Kidney (tissue), 22 donors: ENCODE measurements at regions of chr19 and their contacts with region 1.

Region 1: GRCh38 chr19:17993076-17993813 is 14.7 kb upstream of the ARRDC2 start:
- DNase-seq: no peak
- H3K4me3 ChIP-seq: no peak overlapping the region
- H3K27ac ChIP-seq: no peak overlapping the region
- H3K4me1 ChIP-seq: no peaks in the 10 kb centered on the region
- H3K27me3 ChIP-seq: no peaks in the 10 kb centered on the region
- CTCF ChIP-seq: no peak

Region 2: DNA sequence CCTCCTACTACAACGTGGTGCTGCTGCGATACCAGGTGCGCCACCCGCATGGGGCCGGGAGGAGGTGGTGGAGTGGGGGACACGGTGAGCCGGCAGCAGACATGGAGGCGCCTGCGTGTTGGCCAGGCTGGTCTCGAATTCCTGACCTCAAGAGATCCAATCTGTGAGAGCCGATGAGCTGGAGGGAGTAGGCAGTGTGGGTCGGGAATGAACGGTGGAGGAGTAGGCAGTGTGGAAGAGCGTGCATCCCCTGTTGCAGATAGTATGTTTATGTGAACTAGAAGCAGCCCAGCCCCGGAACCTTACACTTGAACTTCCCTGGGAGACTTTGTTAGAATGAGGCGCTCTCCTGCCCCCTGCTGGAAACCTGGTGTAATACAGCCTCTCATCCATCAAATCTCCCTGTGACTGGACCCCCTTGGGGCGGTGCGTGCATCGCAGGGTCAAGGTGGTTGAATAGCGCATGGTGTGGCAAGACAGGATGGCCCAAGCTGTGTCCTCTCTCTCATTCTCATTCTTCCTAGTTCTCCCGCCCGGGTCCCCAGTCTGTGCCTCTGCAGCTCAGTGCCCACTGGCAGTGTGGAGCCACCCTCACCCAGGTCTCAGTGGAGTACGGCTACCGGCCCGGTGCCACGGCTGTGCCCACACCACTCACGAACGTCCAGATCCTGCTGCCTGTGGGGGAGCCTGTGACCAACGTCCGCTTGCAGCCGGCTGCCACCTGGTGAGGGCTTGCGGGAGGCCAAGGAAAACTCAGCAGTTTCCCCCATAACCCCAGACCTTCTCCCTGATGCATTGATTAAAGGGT is 208.8 kb before region 1 on chr19:
- intact Hi-C with region 1: no loop called
- DNase-seq: peak; percentile 78 to 91 (median 86)
- H3K4me3 ChIP-seq: peak overlapping the region in 2 of 3 donors; percentile 3 to 4
- H3K27ac ChIP-seq: no peak overlapping the region
- H3K4me1 ChIP-seq: no peaks in the 10 kb centered on the region
- H3K27me3 ChIP-seq: no peaks in the 10 kb centered on the region
- CTCF ChIP-seq: peak; percentile 62

Region 3: DNA sequence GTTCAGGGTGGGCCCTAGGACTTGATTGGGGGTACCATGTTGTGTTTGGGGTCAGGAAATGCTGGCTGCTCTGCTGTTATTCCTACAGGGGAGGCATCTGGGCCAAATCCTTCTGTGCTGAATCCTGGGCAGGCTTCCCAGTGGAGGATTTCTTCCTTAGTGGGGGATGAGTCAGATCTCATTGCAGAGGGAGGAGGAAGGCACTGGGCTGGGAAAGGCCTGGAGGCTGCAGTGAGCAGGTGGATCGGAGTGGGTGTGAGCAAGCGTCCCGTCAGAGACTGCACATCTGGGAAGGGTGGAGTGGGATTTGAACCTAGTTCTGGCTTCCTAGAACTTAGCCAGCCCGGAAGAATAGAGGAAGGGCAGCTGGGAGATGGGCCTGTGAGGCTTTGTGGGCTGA is 48.9 kb before region 1 on chr19:
- intact Hi-C with region 1: loop called (anchors 5 kb)
- DNase-seq: no peak
- H3K4me3 ChIP-seq: no peak overlapping the region
- H3K27ac ChIP-seq: no peak overlapping the region
- H3K4me1 ChIP-seq: peaks cover 0 to 8% (median 5%) of the 10 kb centered on the region in 3 donors
- H3K27me3 ChIP-seq: no peaks in the 10 kb centered on the region
- CTCF ChIP-seq: no peak